ENCODE measurements at regions of chr9 and their contacts with region 1.

Region 1: DNA sequence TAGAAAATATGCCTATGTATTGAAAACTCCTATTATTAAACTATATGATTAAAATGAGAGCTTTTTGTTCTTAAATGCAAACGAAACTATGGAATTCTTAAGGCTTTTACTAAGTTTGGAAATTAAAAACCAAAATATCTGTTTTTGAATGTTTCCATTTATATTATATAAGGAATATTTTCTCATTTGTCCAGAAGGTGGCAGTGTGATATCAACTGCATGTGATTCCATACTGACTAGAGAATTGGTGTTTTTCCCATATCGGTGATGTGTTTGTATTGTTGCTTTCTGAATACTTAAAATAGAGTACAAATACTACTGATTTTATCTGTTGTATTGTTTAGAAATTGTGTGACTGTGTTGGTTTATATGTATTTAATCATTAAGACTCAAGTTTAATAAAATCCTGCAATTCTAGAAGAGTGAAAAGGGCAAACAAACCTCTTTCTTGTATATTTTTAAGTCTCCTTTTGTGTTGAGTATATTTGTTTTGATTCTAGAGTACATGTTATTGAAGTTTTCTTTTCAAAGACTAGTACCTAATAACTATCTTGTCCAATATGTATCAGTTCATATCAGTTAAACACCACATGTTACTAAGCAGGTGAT is 320.8 kb downstream of the CCDC171 start:
- DNase-seq: no peak
- H3K4me3 ChIP-seq: no peak overlapping the region
- H3K27ac ChIP-seq: no peak overlapping the region
- H3K4me1 ChIP-seq: no peaks in the 10 kb centered on the region
- H3K27me3 ChIP-seq: no peaks in the 10 kb centered on the region
- CTCF ChIP-seq: peak in 2 of 3 experiments; percentile 48 to 67

Region 2: GRCh38 chr9:15498246-15498995 is 375.3 kb before region 1 on chr9:
- intact Hi-C with region 1: no loop called
- DNase-seq: no peak
- H3K4me3 ChIP-seq: no peak overlapping the region
- H3K27ac ChIP-seq: no peak overlapping the region
- H3K4me1 ChIP-seq: peaks cover 0 to 18% of the 10 kb centered on the region in 2 donors
- H3K27me3 ChIP-seq: no peaks in the 10 kb centered on the region
- CTCF ChIP-seq: no peak

Region 3: GRCh38 chr9:15889555-15889954 is 15.9 kb after region 1 on chr9:
- intact Hi-C with region 1: no loop called
- DNase-seq: no peak
- H3K4me3 ChIP-seq: no peak overlapping the region
- H3K27ac ChIP-seq: no peak overlapping the region
- H3K4me1 ChIP-seq: no peaks in the 10 kb centered on the region
- H3K27me3 ChIP-seq: no peaks in the 10 kb centered on the region
- CTCF ChIP-seq: no peak

Region 4: GRCh38 chr9:15901572-15901971 is 27.9 kb after region 1 on chr9:
- intact Hi-C with region 1: no loop called
- DNase-seq: no peak
- H3K4me3 ChIP-seq: no peak overlapping the region
- H3K27ac ChIP-seq: no peak overlapping the region
- H3K4me1 ChIP-seq: no peaks in the 10 kb centered on the region
- H3K27me3 ChIP-seq: no peaks in the 10 kb centered on the region
- CTCF ChIP-seq: no peak

Region 5: DNA sequence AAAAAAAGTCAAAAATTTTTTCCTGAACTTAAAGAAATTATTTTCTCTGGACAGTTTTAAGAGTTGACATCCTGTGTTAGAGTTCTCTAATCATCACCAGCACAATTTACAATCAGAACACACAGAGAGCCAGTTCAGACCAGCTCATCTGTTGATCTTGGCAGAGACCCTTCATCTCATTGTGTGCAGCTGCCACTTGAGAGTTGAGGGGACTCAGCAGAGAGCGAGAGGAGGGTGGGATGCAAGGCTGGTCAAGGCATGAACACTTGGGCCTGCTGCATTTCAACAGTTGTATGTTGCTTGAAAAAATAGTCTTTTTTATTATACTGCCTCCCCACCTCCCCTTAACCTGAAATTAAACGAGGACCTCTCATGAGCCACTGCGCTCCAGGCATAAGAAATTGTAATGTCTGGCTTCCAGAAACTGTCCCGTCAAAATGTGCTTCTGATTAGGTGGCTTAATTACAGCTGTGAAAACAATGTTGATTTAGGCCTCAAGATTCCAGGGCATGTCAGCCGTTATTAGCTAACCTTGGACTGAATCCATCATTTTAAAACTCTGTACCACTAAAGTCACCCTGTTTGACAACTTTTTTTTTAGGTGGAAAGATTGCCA is 62.7 kb after region 1 on chr9:
- intact Hi-C with region 1: no loop called
- DNase-seq: no peak
- H3K4me3 ChIP-seq: no peak overlapping the region
- H3K27ac ChIP-seq: no peak overlapping the region
- H3K4me1 ChIP-seq: no peaks in the 10 kb centered on the region
- H3K27me3 ChIP-seq: no peaks in the 10 kb centered on the region
- CTCF ChIP-seq: no peak

Region 6: DNA sequence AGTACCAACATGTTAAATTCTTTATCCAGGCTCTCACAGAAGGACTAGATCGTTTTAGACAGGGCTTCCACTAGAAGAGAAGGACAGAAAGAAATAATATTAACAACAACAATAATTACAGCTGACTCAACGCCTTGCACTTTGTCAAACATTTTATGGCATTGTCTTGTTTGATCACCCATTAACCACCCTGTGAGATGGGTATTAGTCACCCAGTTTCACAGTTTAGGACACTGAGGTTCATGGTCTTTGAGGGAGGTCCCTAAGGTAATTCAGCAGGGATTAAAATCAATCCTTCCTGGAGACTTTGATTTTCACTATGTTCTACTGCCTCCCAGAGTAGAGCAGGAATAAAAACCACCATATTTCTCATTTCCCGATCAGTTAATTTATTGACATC is 1048.2 kb after region 1 on chr9:
- intact Hi-C with region 1: loop called (anchors 10 kb)
- DNase-seq: no peak
- H3K4me3 ChIP-seq: no peak overlapping the region
- H3K27ac ChIP-seq: no peak overlapping the region
- H3K4me1 ChIP-seq: no peaks in the 10 kb centered on the region
- H3K27me3 ChIP-seq: no peaks in the 10 kb centered on the region
- CTCF ChIP-seq: no peak

Region 7: DNA sequence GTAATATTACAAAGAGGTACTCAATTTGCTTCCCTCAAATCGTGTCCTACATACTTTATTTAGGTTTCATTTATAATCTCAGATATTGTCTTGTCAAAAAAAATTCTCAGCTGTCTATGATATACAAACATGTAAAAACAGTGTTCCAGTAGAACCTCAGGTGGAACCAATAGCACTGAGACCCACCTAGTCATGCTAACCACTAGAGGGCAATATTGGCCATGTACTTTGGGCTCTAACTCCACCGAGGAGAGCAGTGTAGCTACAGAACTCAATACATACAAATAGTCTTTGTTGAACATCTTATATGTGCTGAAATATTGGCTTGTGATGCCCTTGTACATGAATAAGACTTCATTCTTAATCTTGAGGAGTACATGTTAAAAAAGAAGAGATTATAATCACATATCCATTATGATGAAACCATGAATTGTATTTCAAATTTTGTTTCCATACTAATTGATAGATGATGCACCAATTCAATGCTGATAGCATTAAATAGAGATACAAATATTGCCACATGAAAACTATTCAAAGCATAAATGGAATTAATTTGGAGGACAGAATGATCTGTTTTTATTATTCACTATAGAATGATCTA is 1190.0 kb after region 1 on chr9:
- intact Hi-C with region 1: loop called (anchors 10 kb)
- DNase-seq: no peak
- H3K4me3 ChIP-seq: no peak overlapping the region
- H3K27ac ChIP-seq: no peak overlapping the region
- H3K4me1 ChIP-seq: no peaks in the 10 kb centered on the region
- H3K27me3 ChIP-seq: no peaks in the 10 kb centered on the region
- CTCF ChIP-seq: peak in 2 of 3 experiments; percentile 68 to 71

Region 8: DNA sequence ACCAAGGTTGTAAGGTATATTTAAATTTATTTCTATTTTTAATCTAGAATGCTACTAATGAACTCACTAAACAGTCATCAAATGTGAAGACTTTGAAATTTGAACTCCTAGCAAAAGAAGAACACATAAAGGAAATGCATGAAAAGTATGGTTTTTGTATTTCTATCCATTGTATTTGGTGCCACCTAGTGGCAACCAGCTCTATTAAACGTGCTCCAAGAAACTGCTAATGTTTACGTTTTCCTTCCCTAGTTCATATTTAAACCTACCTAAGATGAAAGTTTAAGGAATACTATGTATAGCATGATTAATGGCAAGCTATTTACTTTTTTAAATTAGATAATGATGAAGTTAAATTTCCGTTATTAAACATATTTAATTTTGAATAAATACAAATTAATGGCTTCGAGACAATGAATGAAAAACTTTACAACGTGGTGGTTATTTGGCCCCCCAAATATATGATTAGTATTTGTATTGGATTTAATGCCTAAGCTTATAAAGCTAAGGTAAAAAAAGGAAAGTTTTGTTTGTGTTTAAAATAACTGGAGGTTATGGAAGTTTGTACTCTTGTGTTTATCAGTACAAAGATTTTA is 1589.3 kb after region 1 on chr9:
- intact Hi-C with region 1: loop called (anchors 5 kb)
- DNase-seq: peak in 1 of 2 donors; percentile 60
- H3K4me3 ChIP-seq: no peak overlapping the region
- H3K27ac ChIP-seq: no peak overlapping the region
- H3K4me1 ChIP-seq: no peaks in the 10 kb centered on the region
- H3K27me3 ChIP-seq: no peaks in the 10 kb centered on the region
- CTCF ChIP-seq: peak; percentile 35 to 69 (median 62)